ENCODE measurements at regions of chr16 and their contacts with region 1.

Region 1: DNA sequence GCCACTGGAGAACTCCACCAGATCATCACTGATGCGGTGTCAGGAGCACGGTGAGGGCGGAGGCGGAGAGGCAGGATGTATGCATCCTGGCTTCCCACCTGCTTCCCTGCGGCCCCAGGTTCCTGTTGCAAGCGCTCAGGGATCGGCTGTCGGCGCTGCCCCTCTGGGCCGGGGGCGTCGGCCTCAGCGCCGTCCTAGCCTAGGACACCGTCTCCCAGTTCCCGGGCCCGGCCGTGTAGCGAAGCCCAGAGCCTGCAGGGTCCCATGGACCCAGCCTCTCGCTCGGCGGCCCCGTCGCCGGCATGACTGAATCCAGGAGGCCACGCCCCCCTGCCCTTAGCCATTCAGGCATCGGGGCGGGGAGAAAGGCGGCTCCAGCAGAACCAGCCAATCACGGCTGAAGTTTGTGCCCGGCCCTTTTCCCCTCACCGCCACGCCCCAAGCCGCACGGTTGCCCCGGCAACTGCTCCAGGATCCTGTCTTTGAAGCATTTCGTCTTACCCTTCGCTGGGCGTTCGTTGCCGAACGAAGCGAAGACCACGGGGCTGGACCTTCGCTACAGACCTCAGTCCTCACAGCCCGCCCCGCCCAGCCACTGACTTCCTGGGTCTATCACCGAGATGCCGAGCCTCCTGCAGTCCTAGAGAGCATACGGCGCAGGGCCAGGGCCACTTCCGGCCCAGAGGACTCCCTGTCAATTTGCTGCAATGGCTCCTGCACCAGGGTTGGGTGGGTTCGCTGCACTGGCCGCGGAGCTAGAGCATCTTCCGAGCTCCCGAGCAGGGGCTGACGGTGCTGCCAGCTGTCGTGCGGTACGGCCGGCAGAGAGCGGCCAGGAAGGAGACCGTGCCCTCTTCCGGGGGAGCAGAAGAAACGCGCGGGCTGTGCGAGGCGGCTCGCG is 10.6 kb upstream of the ZNF213 start:
- DNase-seq: peak; percentile 99
- ATAC-seq: peak; percentile 89
- H3K4me3 Mint-ChIP-seq: peak overlapping the region; percentile 93
- H3K27ac Mint-ChIP-seq: peak overlapping the region; percentile 99
- H3K4me1 Mint-ChIP-seq: peaks cover 46% of the 10 kb centered on the region
- H3K27me3 Mint-ChIP-seq: peaks cover 4% of the 10 kb centered on the region

Region 2: DNA sequence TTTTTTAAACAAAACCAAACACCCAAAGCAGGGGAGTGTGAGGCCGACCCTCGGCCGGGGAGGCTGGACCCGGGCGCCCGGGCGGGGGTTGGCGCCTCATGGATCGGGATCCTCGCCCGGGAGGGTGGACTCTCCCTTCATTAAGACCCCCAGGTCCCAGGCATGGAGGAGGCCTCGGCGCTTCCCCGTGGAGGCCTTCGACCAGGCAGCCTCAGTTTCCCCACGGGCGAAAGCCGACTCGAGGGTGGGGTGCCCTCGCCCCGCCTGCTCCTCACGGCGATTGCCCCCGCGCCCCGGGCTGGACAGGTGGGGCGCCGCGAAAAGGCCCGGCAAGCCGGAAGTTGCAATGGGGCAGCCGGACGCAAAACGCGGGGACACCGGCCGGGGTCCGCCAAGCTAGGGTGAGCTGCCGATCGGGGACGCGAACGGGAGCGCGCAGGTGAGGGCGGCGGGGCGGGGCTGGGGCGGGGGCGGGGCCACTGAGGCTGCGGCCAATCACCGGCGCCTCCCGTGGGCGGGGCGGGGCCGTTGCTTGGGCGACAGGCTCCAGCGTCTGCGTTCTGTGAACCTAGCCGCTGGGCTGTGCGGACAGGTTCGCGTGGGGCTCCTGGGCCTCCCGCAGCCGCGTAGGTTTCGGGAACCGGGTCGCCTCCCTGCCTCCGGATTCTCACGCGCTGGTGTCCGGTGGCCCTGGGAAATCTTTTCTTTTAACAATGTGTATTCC is 17.9 kb before region 1 on chr16:
- CTCF ChIA-PET with region 1: interaction called, 354 read pairs
- POLR2A ChIA-PET with region 1: interaction called, 8 read pairs
- DNase-seq: peak; percentile 94
- ATAC-seq: peak; percentile 97
- H3K4me3 Mint-ChIP-seq: peak overlapping the region; percentile 76
- H3K27ac Mint-ChIP-seq: peak overlapping the region; percentile 87
- H3K4me1 Mint-ChIP-seq: peaks cover 45% of the 10 kb centered on the region
- H3K27me3 Mint-ChIP-seq: peaks cover 6% of the 10 kb centered on the region